Dorsolateral prefrontal cortex (tissue), 120 donors: ENCODE measurements at regions of chr20 and their contacts with region 1.

Region 1: DNA sequence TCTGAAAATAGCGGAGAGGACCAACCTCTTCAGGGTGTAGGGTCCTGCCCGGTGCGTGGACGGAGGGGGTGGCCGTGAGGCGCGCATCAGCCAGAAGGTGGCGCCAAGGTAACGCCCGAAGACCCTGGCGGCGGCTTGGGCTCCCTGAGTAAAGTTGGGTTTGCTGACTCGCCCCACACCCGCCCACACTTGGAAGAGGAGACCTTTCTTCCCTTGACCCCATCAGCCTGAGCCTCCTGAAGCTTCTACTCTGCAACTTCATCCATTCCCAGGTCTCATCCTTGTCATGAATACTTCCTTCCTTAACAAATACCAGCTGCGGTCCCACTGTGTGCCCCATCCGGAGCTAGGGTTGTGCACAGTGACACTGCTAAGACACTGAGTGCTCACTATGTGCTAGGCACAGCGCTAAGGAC is 14.6 kb downstream of the CD40 start:
- DNase-seq: peak; percentile 64 to 88 (median 76)
- H3K4me3 ChIP-seq: no peak overlapping the region
- H3K27ac ChIP-seq: peak overlapping the region in 3 of 59 donors; percentile 18 to 91 (median 27)
- H3K27me3 ChIP-seq: peaks cover 0 to 22% (median 0%) of the 10 kb centered on the region in 45 donors
- CTCF ChIP-seq: peak; percentile 46 to 93 (median 87)

Region 2: GRCh38 chr20:46051556-46052308 is 81.0 kb before region 1 on chr20:
- intact Hi-C with region 1: no loop called
- DNase-seq: peak in 1 of 10 donors; percentile 45
- H3K4me3 ChIP-seq: no peak overlapping the region
- H3K27ac ChIP-seq: peak overlapping the region in 4 of 59 donors; percentile 8 to 23 (median 15)
- H3K27me3 ChIP-seq: peaks cover 0 to 4% (median 0%) of the 10 kb centered on the region in 45 donors
- CTCF ChIP-seq: no peak

Region 3: GRCh38 chr20:46111028-46111835 is 21.5 kb before region 1 on chr20:
- intact Hi-C with region 1: no loop called
- DNase-seq: peak in 1 of 10 donors; percentile 11
- H3K4me3 ChIP-seq: no peak overlapping the region
- H3K27ac ChIP-seq: no peak overlapping the region
- H3K27me3 ChIP-seq: peaks cover 0 to 40% (median 0%) of the 10 kb centered on the region in 45 donors
- CTCF ChIP-seq: no peak

Region 4: DNA sequence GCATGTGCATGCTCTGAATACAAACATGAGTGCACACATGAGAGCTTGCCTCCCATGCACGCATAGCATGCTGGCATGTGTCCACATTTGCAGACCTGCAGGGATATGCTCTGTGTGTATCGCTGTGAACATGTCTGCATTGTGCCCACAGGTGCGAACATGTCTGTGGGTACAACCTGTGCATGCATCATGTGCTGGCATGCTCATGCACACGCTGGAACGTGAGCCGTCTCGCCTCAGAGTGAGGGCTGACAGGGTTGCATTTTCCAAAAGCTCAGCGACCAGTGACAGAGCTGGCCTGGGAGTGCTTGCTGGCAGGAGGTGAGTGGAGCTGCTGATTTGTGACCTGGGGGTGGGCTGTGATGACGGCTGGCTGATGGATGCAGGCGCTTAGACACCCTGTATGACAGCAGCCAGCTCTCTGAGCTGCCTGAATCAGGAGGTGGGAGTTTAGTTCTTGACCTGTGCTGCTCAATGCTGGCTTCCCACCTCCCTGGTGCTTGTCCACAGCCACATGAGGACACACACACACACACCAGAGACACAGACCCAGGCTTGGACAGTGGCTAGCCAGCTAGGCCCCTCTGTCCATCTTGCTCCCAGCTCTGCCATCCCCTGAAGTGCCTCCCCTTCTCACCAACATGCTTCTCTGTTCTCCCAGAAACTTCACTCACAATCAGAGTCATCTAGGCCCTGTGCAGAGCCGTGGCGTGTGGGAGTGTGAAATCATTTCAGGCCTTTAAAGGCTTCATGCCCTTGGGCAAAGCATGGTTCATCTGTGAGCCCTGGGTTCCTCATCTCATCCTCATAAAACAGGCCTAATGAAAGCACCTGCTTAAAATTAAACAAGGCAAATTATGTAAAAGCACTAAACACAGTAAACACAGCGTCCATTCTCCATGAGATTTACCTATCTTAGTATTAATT is 36.8 kb after region 1 on chr20:
- intact Hi-C with region 1: no loop called
- DNase-seq: peak in 1 of 10 donors; percentile 28
- H3K4me3 ChIP-seq: no peak overlapping the region
- H3K27ac ChIP-seq: peak overlapping the region in 2 of 59 donors; percentile 14 to 51
- H3K27me3 ChIP-seq: peaks cover 0 to 38% (median 11%) of the 10 kb centered on the region in 45 donors
- CTCF ChIP-seq: no peak

Region 5: DNA sequence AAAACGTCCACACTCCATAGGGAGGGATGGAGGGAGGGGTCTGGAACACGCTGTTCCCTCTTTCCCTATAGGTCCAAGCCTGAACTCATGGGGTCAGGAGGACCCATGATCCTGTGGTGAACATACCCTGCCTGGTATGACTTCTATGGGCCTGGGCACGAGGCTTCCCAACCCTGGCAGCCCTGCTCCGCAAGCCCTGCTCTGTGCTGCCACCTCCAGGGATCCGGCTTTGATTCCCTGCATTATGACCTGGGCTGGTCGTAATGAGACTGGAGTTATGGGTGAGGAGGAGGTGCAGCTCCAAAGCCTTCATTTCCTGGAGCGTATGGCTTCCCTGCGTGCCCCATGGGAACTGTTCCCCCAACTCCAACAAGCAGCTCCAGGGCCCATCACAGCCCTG is 120.7 kb after region 1 on chr20:
- intact Hi-C with region 1: loop called in 1 of 2 experiments (anchors 5 kb)
- DNase-seq: peak in 3 of 10 donors; percentile 21 to 74 (median 43)
- H3K4me3 ChIP-seq: no peak overlapping the region
- H3K27ac ChIP-seq: peak overlapping the region in 2 of 59 donors; percentile 16 to 60
- H3K27me3 ChIP-seq: peaks cover 0 to 44% (median 15%) of the 10 kb centered on the region in 45 donors
- CTCF ChIP-seq: peak in 35 of 56 donors; percentile 11 to 50 (median 26)

Region 6: GRCh38 chr20:46307139-46307998 is 174.7 kb after region 1 on chr20:
- intact Hi-C with region 1: loop called (anchors 2 kb)
- DNase-seq: peak in 4 of 10 donors; percentile 49 to 80 (median 70)
- H3K4me3 ChIP-seq: peak overlapping the region; percentile 37 to 74 (median 59)
- H3K27ac ChIP-seq: peak overlapping the region in 29 of 59 donors; percentile 10 to 90 (median 54)
- H3K27me3 ChIP-seq: peaks cover 0 to 58% (median 12%) of the 10 kb centered on the region in 45 donors
- CTCF ChIP-seq: peak; percentile 43 to 83 (median 72)

Region 7: DNA sequence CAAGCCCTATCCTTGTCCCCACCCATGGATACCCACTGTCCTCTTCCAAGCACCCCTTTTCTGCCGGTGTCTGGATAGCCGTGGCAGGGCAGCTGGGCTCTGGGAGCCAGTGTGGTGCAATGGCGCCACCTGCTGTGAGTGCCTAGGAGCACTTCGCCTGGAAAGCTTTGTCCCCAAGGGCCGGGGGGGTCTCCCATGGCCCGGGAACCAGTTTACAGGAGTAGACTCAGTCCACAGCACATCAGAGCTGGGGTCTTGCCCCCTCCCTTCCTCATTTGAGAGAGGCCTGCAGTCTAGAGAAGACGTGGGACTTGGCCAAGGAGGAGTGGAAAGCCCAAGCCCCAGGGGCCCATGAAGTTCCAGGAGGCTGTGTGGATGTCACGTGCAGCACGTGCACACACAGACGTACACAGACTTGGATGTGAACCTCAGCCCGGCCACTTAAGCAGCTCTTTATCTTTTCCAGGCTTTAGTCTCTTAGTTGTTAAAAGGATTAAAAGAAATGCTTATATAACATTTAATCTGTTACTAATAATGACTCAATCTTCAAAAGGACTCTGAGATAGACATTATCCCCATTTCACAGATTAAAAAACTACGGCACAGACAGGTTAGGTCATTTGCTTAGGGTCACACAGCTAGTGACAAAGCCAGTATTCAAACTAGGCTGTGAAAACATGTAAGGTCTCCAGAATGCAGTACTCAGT is 216.5 kb after region 1 on chr20:
- intact Hi-C with region 1: loop called (anchors 1 to 2 kb)
- DNase-seq: peak in 9 of 10 donors; percentile 61 to 87 (median 69)
- H3K4me3 ChIP-seq: peak overlapping the region in 1 of 59 donors; percentile 22
- H3K27ac ChIP-seq: peak overlapping the region in 48 of 59 donors; percentile 24 to 91 (median 68)
- H3K27me3 ChIP-seq: no peaks in the 10 kb centered on the region
- CTCF ChIP-seq: peak in 55 of 56 donors; percentile 46 to 94 (median 84)

Region 8: GRCh38 chr20:46388937-46389336 is 256.2 kb after region 1 on chr20:
- intact Hi-C with region 1: no loop called
- DNase-seq: peak in 1 of 10 donors; percentile 98
- H3K4me3 ChIP-seq: no peak overlapping the region
- H3K27ac ChIP-seq: peak overlapping the region in 32 of 59 donors; percentile 2 to 93 (median 42)
- H3K27me3 ChIP-seq: no peaks in the 10 kb centered on the region
- CTCF ChIP-seq: no peak

Region 9: DNA sequence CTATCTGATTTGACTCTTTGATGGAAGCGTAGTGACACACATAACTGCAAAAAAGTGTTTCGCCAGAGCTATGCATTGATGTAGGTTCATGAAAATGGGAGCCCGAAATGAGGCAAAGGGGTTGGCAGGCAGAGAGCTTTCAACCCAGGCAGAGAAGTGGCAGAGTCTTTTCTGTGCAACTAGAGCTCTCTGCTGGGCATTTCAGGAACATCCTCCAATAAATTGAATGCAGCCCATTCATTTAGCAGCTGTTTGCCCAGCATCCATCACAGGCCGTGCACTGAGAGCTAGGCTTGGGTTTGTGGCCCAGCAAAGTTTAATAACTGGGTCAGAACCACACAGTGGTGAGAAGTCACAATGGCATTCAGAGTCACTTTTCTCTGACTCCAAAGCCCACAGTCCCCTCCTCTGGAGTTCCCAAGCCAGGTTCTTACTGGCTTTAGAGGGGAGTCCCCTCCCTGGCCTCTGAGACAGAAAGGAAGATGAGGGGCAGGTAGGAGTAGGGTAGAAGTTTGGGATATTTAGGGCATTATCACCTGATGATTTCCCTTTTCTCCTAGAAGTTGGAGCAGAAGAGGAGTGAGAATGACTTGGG is 305.5 kb after region 1 on chr20:
- intact Hi-C with region 1: loop called (anchors 5 kb)
- DNase-seq: peak in 9 of 10 donors; percentile 36 to 81 (median 63)
- H3K4me3 ChIP-seq: peak overlapping the region in 3 of 59 donors; percentile 27 to 33 (median 32)
- H3K27ac ChIP-seq: peak overlapping the region in 38 of 59 donors; percentile 5 to 80 (median 50)
- H3K27me3 ChIP-seq: no peaks in the 10 kb centered on the region
- CTCF ChIP-seq: peak; percentile 34 to 92 (median 74)